CD8-positive, alpha-beta T cell (primary cell): ENCODE measurements at regions of chr16 and their contacts with region 1.

Region 1: GRCh38 chr16:24729362-24729984 is at the start of gene TNRC6A:
- DNase-seq: peak; percentile 61 to 92 (median 76)
- ATAC-seq: peak; percentile 78
- H3K4me3 ChIP-seq: peak within 1 kb of the TSS; percentile 93 to 97
- H3K4me3 Mint-ChIP-seq: peak within 1 kb of the TSS; percentile 95
- H3K27ac ChIP-seq: peak within 1 kb of the TSS; percentile 97 to 98
- H3K27ac Mint-ChIP-seq: peak within 1 kb of the TSS; percentile 98
- H3K4me1 ChIP-seq: peaks cover 40% of the 10 kb centered on the region
- H3K4me1 Mint-ChIP-seq: peaks cover 45% of the 10 kb centered on the region
- H3K27me3 ChIP-seq: no peaks in the 10 kb centered on the region
- H3K27me3 Mint-ChIP-seq: no peaks in the 10 kb centered on the region
- CTCF ChIP-seq: no peak
- total RNA-seq, gene TNRC6A: 65.2 to 73.4 TPM

Region 2: DNA sequence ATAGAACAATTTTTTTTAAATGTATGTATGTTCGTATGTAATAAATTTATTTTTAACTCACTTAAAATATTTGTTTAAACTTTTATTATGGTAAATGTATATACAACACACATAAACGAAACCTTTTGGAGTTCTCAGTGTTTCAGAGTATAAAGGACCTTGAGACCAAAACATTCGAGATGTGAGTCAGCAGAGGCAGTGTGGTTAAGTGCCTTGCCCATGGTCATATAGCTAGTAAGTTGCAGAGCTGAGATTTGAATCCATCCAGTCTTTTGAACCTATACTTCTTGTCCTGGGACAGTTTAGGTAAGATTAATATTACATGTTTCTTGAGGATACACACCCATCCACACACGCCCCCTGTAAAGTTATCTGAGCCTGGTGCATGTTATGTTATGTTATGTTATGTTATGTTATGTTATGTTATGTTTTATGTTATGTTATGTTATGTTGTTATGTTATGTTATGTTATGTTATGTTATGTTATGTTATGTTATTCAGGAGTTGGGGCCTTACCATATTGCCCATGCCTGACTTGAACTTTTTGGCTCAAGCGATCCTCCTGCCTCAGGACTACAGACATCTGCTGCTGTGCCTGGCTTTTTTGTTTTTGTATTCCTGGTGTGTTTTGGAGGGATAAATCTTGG is 41.8 kb after region 1 on chr16:
- CTCF ChIA-PET with region 1: no interaction called
- POLR2A ChIA-PET with region 1: no interaction called
- intact Hi-C with region 1: loop called in 1 of 2 experiments (anchors 5 kb)
- DNase-seq: no peak
- ATAC-seq: no peak
- H3K4me3 ChIP-seq: no peak overlapping the region
- H3K4me3 Mint-ChIP-seq: no peak overlapping the region
- H3K27ac ChIP-seq: no peak overlapping the region
- H3K27ac Mint-ChIP-seq: no peak overlapping the region
- H3K4me1 ChIP-seq: no peaks in the 10 kb centered on the region
- H3K4me1 Mint-ChIP-seq: peaks cover 40% of the 10 kb centered on the region
- H3K27me3 ChIP-seq: no peaks in the 10 kb centered on the region
- H3K27me3 Mint-ChIP-seq: no peaks in the 10 kb centered on the region
- CTCF ChIP-seq: no peak